Right cardiac atrium (tissue), 5 donors: ENCODE measurements at regions of chr9 and their contacts with region 1.

Region 1: DNA sequence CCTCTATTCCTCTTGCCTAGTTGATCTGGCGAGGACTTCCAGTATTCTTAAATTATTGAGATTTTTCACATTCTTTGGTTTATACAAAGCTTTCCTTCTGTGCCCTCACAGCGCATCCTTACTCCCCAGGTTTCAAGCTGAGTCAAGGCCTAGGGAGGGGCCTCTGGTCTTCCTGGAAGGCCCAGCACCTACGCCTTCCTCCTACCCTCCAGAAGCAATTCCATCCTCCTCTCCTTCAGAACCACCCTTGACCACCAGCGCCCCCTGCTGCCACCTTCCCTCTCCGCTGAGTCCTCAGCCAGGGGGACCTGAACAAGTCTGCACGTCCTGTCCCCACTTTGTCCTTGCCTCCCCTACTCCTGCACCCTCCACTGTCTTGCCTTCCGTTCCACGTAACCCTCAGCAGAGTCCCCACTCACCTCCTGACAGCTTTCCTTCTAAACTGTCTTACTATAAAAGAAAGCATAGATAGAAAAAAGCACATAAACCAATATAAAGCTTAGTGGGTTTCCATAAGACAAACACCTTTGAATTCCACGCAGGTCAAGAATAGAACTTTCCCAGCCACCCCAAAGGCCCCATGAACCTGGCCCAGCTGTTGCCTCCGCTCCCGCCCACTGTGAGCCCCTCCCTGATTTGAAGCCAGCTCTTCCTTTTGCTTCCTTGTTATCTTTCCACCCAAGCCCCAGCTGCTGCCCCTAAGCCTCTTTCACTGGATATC is 63.0 kb upstream of the CTSL start:
- DNase-seq: peak; percentile 79 to 92 (median 91)
- ATAC-seq: peak; percentile 70 to 85
- H3K4me3 ChIP-seq: no peak overlapping the region
- H3K27ac ChIP-seq: no peak overlapping the region
- H3K4me1 ChIP-seq: no peaks in the 10 kb centered on the region
- H3K27me3 ChIP-seq: no peaks in the 10 kb centered on the region

Region 2: DNA sequence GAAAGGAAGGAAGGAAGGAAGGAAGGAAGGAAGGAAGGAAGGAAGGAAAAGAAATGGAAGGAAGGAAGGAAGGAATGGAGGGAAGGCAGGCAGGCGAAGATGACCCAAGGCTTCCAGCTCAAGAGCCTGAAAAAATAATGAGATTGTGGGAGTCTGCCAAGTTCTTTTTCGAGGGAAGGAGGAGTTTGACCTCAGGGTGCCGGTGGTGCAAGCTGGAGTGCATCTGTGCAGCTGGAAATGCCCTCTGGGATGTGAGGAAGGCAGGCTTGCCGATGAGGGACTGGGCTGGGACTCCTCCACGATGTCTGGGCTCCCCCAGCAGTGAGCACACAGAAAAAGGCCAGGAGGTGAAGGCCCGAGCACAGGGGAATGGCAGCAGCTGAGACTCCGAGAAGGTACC is 320.2 kb before region 1 on chr9:
- intact Hi-C with region 1: loop called (anchors 1 to 5 kb)
- DNase-seq: peak in 2 of 3 donors; percentile 31 to 74
- ATAC-seq: peak; percentile 63 to 74
- H3K4me3 ChIP-seq: no peak overlapping the region
- H3K27ac ChIP-seq: no peak overlapping the region
- H3K4me1 ChIP-seq: peaks cover under 1% of the 10 kb centered on the region
- H3K27me3 ChIP-seq: no peaks in the 10 kb centered on the region

Region 3: DNA sequence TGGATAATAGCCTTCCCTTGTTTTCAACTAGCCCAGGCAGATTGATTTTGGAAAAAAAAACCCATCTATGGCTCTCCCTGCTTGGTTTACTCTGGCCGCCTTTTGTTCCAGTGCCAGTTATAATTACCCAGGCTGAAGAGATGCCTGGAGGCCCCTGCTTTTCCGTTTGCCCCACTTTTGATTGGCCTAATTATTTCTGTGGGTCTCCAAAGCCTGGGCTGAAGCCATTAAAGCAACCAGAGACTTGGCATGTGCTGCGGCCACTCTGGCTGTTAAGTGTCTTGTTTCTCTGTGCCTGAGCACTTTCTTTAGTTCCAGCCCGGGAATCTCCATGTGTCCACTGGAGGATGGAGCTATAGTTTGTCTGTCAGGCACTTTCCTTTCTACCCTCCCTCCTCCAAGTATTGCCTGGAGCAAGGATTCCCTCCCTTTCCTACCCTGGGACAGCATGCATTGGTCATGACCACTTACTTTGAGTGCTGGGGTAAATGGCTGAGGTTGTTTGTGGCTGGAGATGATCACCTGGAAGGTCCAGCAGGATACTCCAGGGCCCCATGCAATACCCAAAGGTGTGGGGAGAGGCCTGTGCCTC is 42.1 kb before region 1 on chr9:
- intact Hi-C with region 1: no loop called
- DNase-seq: no peak
- ATAC-seq: no peak
- H3K4me3 ChIP-seq: no peak overlapping the region
- H3K27ac ChIP-seq: no peak overlapping the region
- H3K4me1 ChIP-seq: no peaks in the 10 kb centered on the region
- H3K27me3 ChIP-seq: no peaks in the 10 kb centered on the region